Activated naive CD4-positive, alpha-beta T cell treated with anti-CD3 and anti-CD28 coated beads for 36 hours (primary cell): ENCODE measurements at regions of chr1 and their contacts with region 1.

Region 1: GRCh38 chr1:209190591-209191261 is 392.8 kb upstream of the CAMK1G start:
- DNase-seq: peak; percentile 53
- H3K4me3 Mint-ChIP-seq: no peak overlapping the region
- H3K27ac Mint-ChIP-seq: no peak overlapping the region
- H3K4me1 Mint-ChIP-seq: no peaks in the 10 kb centered on the region
- H3K27me3 Mint-ChIP-seq: peaks cover 2% of the 10 kb centered on the region

Region 2: GRCh38 chr1:208652296-208653160 is 538.2 kb before region 1 on chr1:
- CTCF ChIA-PET with region 1: interaction called, 4 read pairs
- intact Hi-C with region 1: loop called (anchors 1 kb)
- DNase-seq: peak; percentile 41
- H3K4me3 Mint-ChIP-seq: no peak overlapping the region
- H3K27ac Mint-ChIP-seq: no peak overlapping the region
- H3K4me1 Mint-ChIP-seq: no peaks in the 10 kb centered on the region
- H3K27me3 Mint-ChIP-seq: peaks cover 14% of the 10 kb centered on the region